Posterior cingulate gyrus (tissue), 11 donors: ENCODE measurements at regions of chr10 and their contacts with region 1.

Region 1: GRCh38 chr10:37495415-37495814 is 362.0 kb downstream of the ZNF248 start:
- DNase-seq: no peak

Region 2: GRCh38 chr10:36899651-36900050 is 595.8 kb before region 1 on chr10:
- intact Hi-C with region 1: loop called (anchors 10 kb)
- DNase-seq: no peak

Region 3: GRCh38 chr10:37572206-37572605 is 76.8 kb after region 1 on chr10:
- intact Hi-C with region 1: no loop called
- DNase-seq: no peak